Cardiac septum (tissue), 1 donor: ENCODE measurements at regions of chr7 and their contacts with region 1.

Region 1: DNA sequence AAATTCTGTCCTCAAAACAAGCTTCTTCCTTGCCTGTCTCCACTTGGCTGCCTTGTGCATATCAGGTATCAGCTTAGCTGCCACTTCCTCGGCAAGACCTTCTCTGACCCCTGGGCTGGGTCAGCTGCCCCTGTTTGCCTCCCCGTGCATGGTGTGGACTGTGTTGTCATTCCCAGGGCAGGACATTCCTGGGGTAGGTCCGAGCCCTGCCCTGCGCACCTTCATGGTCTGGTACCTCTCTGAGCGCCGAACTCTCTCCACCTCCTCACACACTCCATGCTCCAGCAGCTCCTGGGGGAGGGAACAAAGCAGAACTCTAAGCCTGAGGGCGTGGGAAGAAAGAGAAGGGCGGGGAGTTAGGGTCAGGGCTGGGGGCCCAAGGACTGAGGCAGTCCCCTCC is 3.8 kb downstream of the POLM start:
- DNase-seq: no peak

Region 2: DNA sequence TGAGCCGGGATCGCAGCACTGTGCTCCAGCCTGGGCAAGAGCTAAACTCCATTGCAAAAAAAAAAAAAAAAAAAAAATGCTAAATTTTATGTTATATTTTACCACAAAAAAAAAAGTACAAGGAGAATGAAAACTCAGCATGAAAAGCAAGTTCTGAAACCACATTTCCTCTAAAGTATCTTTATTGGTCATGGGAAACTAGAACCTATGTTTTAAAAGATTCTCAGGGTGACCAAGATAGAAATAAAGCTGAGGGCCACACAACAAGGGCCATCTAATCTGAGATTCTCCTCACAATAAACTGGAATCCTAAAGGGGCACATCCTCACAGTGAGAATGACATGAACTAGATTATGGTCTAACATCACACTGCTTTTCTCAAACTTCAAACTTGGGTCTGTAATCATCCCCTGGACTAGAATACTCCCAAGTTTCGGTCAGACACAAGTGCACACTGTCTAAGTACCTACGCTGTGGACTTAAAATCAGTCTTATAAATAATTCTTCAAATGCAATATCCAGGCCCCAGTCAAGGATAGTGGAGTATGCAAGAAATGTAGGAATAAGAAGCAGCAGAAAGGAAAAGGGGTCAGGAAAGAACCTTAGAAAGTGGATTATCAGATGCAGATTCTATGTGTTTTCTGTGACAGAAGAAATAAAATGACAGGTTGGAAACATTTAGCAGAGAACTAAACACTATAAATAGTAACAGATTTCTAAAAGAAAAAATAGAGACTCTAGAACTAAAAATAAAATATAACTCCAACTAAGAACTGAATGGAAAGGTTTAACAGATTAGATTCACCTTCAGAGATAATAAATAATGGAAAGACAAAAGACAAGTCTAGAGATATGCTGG is 399.1 kb before region 1 on chr7:
- intact Hi-C with region 1: no loop called
- DNase-seq: no peak

Region 3: GRCh38 chr7:43869006-43869866 is 209.3 kb before region 1 on chr7 and contains the start of gene MRPS24:
- intact Hi-C with region 1: no loop called
- DNase-seq: peak; percentile 97
- total RNA-seq, gene MRPS24: 101 TPM

Region 4: DNA sequence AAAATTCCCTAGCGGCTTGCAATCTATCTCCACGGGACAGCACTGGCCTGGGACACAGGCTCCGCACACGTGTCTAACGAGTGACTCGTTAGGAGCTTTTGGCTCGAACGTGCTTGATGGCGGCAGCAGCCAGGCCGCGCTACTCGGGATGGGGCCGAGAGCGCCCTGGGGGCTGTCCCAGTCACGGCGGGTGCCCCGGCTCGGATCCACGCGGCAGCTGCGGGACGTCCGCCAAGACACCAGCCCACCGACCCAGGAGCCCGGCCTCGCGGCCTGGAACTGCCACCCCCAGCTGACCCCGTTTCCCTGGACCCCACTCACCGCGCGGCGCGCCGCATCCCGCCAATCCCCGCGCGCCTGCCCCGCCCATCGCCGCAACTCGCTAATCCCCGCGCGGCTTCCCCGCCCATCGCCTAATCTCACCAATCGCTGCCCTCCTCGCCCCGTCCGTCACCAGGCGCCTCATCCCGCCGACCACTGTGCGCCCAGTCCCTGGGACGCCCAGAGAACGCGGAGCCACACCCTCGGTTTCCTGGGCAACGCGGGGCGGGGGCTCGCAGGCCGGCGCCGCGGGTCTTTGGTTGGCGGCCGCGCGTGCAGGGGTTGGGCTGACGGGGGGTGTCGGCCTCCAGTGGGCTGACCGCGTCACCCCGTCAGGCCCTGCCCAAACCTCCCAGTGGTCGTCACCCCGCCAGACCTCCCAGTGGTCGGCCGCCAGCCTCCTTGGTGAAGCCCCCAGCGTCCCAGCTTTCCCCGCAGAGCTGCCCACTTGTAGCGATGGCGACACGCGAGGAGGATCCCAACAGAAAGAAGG is 44.9 kb after region 1 on chr7 and contains the start of gene POLD2:
- intact Hi-C with region 1: loop called (anchors 2 kb)
- DNase-seq: peak; percentile 99
- total RNA-seq, gene POLD2: 88.1 TPM

Region 5: GRCh38 chr7:44885394-44886317 is 807.1 kb after region 1 on chr7 and contains the start of gene PURB:
- intact Hi-C with region 1: no loop called
- DNase-seq: peak; percentile 96
- total RNA-seq, gene PURB: 19.1 TPM